HEK293T (cell line): ENCODE measurements at regions of chr16 and their contacts with region 1.

Region 1: GRCh38 chr16:1964506-1965395 is at the start of gene RPS2:
- DNase-seq: peak; percentile 100

Region 2: DNA sequence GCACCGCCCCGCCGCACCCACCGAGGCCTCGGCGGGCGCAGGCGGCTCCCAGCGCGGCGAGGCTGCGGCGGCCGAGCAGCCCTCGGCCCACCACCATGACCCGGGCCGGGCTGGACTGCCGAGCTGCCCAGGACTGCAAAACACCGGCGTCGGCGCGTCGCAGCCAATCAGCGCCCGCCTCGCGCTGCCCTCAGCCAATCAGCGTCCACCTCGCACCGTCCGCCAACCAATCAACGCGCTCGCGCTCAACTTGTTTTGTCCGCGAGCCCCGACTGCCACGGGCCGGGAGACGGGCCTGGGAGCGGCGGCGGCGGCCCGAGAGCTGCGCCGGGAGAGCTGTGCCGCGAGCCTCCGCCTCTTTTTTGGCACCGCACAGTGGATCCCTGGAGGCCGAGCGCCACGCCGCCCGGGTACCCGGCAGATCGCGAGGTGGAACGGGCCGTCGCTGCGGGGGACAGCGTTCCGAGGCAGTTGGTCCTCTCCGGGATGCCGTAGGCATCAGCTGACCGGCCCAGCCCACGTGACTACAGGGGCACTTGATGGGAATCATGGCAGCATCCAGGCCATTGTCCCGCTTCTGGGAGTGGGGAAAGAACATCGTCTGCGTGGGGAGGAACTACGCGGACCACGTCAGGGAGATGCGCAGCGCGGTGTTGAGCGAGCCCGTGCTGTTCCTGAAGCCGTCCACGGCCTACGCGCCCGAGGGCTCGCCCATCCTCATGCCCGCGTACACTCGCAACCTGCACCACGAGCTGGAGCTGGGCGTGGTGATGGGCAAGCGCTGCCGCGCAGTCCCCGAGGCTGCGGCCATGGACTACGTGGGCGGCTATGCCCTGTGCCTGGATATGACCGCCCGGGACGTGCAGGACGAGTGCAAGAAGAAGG is 137.8 kb before region 1 on chr16 and contains the starts of genes FAHD1 and HAGH:
- CTCF ChIA-PET with region 1: no interaction called
- POLR2A ChIA-PET with region 1: interaction called, 13 read pairs
- DNase-seq: peak; percentile 97

Region 3: DNA sequence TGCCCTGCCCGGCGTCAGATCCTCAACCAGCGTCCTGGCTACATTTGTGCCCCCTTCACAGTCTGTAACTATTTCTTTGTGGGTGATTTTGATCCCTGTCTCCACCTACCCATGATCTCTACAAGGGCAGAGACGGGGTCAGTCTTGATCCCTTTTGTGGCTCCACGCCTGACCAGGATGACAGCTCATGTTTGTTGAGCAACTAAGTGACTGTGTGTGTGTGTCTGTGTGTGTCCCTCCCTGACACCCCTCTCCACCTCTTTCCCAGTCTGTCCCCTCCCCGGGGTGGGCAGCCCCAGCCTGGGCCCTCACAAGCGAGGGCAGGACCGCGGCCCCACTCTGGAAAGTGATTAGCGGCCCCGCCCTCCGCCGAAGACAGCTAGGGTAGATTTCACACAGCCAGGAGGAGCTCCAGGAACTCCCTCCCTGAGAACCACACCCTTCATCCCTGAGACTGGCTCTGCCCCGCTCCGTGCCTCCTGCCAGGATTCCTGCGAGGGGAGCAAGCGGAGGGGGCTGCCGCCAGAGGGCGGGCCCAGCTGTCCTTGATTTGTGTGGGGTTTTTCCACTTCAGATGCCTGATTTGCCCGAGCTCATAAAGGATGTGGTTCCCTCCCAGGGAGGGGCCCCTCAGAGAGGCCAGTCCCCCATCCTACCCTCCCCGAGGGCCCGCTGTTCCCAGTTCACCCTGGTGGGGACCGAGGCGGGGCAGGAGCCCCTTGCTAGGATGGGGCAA is 41.3 kb before region 1 on chr16:
- CTCF ChIA-PET with region 1: interaction called, 5 read pairs
- POLR2A ChIA-PET with region 1: interaction called, 21 read pairs
- DNase-seq: peak; percentile 76

Region 4: GRCh38 chr16:1950047-1950446 is 14.7 kb before region 1 on chr16:
- CTCF ChIA-PET with region 1: no interaction called
- POLR2A ChIA-PET with region 1: interaction called, 41 read pairs
- DNase-seq: no peak

Region 5: DNA sequence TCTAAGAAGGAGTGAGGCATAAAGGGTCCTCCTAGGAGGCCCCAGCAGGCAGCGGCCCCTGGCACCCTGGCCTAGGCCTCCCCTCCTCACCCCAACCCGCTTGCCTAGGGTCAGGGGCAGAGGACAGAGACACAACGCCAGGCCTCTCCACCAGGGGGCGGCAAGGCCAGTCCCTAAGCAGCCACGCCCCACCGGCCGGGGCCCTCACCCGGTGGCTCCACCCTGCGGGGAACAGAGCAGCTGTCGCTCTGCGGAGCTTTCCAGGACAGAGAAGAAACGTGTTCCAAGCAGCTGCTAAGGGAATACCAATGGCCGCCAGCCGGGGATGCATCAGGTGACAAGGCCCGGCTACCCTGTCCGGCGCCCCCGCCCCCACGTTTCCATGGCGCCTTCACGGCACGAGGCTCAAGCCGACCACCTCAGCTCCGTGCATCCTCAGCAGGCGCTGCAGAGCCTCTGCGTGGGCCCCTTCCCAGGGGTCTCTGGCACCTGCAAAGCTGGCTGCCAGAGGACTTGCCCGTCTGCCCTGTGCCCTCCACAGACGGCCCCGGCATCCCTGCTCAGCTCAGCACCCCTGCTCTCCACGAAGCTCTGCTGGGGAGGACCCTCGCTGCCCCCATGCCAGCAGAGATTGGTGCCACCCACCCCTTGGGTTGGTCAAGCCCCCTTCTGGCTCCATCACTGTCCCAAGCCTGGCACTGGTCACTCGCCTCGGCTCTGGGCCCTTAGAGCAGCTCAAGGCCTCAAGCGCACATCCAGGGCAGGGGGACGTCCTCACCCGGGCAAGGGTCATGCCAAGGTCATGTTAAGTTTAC is 39.3 kb after region 1 on chr16:
- CTCF ChIA-PET with region 1: no interaction called
- POLR2A ChIA-PET with region 1: interaction called, 23 read pairs
- DNase-seq: peak; percentile 91

Region 6: GRCh38 chr16:2047330-2048115 is 82.8 kb after region 1 on chr16 and contains the starts of genes NTHL1 and TSC2:
- CTCF ChIA-PET with region 1: no interaction called
- POLR2A ChIA-PET with region 1: interaction called, 23 read pairs
- DNase-seq: peak; percentile 100